ENCODE measurements at regions of chr11 and their contacts with region 1.

Region 1: GRCh38 chr11:44565211-44565952 is at the start of gene CD82:
- DNase-seq: peak; percentile 100
- ATAC-seq: peak; percentile 96 to 97 (median 96)
- H3K4me3 ChIP-seq: peak within 1 kb of the TSS; percentile 28 to 74 (median 60)
- H3K27ac ChIP-seq: peak within 1 kb of the TSS; percentile 90 to 99 (median 96)
- H3K4me1 ChIP-seq: peaks cover 20 to 67% (median 45%) of the 10 kb centered on the region in 12 donors
- H3K27me3 ChIP-seq: no peaks in the 10 kb centered on the region
- CTCF ChIP-seq: peak in 9 of 12 donors; percentile 8 to 54 (median 40)
- POLR2A ChIP-seq: peak in 1 of 2 donors; percentile 84
- total RNA-seq, gene CD82: 20.1 to 76.2 (median 37.3) TPM

Region 2: DNA sequence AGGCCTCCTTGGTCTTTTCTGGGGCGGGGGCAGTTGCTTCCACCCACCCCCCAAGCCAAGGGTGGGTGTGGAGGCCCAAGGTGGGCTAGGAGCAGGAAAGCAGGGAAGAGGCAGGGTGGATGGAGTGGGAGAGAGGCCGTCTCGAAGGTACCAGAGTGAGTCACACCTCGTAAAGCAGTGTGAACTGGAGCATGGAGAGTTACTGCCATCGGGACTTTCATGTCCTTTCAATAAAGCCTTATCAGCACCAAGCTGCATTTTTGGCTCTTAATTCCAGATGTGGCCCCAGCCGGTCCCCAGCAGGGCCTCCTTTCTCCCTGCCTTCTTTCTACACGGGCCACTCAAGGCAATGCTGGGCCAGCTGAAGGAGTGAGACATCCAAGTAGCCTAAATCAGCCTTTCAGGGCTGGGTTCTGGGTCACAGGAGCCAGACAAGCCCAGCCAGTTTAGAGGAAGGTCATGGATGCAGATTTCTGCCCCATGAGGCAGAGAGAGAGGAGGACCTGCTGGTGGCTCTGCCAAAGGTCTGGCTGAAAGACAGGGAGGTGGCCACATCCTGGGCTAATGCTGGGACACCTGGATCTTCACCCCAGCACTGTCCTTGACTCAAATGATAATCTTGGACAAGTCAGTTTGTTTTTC is 58.9 kb before region 1 on chr11:
- intact Hi-C with region 1: no loop called
- DNase-seq: no peak
- ATAC-seq: no peak
- H3K4me3 ChIP-seq: no peak overlapping the region
- H3K27ac ChIP-seq: no peak overlapping the region
- H3K4me1 ChIP-seq: no peaks in the 10 kb centered on the region
- H3K27me3 ChIP-seq: no peaks in the 10 kb centered on the region
- CTCF ChIP-seq: no peak
- POLR2A ChIP-seq: no peak

Region 3: GRCh38 chr11:44600839-44601383 is 35.5 kb after region 1 on chr11:
- intact Hi-C with region 1: loop called in 3 of 10 experiments (anchors 5 kb)
- DNase-seq: peak in 3 of 5 donors; percentile 56 to 76 (median 61)
- ATAC-seq: peak in 3 of 4 donors; percentile 23 to 53 (median 48)
- H3K4me3 ChIP-seq: no peak overlapping the region
- H3K27ac ChIP-seq: peak overlapping the region in 3 of 12 donors; percentile 6 to 61 (median 25)
- H3K4me1 ChIP-seq: peaks cover 0 to 69% (median 44%) of the 10 kb centered on the region in 12 donors
- H3K27me3 ChIP-seq: no peaks in the 10 kb centered on the region
- CTCF ChIP-seq: no peak
- POLR2A ChIP-seq: no peak

Region 4: DNA sequence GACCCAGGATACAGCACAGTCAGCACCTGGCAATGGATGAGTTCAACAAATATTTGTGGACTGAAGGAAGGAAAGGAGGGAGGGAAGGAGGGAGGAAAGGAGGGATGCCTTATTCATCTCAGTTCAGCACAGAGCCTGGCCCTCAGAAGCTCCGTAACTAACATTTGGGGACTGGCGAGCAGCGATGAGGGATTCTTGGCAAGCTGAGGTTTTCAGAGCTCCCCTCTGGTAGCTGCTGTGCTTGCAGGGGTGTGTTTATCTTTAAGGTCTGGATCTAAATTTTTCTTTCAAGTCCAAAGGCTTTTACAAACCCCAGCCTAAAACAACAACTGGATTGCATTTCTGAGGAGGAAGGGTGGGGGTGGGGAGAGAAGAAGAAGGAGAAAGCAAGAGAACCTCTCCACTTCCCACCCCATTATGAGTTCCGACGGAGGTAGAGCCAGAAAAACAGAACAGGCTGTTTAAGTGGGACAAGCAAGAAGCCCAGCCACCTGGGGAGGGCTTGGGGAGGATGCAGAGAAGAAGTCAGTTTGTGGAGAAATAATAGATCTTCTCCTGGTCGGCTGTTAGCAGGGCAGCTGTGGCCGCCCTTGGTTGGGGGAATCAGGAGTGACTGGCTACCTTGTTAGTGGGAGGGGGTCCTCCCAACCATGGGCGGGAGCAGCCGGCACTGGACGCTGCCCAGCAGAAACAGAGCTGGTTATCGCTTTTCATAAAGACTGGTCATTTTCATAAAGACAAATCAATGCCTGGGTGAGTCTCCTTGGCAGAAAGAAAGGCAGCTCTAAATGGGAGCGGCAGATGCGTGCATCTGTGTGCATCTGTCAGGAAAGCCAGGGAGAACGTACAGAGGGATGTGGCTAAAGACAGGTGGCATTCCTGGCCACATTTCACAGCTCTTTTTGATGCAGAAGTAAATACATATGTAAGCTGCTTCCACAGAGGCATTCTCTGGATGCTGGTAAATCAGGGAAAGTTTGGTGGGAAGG is 239.4 kb after region 1 on chr11:
- intact Hi-C with region 1: no loop called
- DNase-seq: no peak
- ATAC-seq: no peak
- H3K4me3 ChIP-seq: peak overlapping the region in 1 of 12 donors; percentile 3
- H3K27ac ChIP-seq: peak overlapping the region in 1 of 12 donors; percentile 69
- H3K4me1 ChIP-seq: peaks cover 0 to 43% (median 18%) of the 10 kb centered on the region in 12 donors
- H3K27me3 ChIP-seq: no peaks in the 10 kb centered on the region
- CTCF ChIP-seq: no peak
- POLR2A ChIP-seq: no peak

Region 5: GRCh38 chr11:44899959-44900358 is 334.6 kb after region 1 on chr11:
- intact Hi-C with region 1: loop called in 2 of 10 experiments (anchors 5 kb)
- DNase-seq: peak in 2 of 5 donors; percentile 28 to 60
- ATAC-seq: peak; percentile 29 to 62 (median 56)
- H3K4me3 ChIP-seq: no peak overlapping the region
- H3K27ac ChIP-seq: no peak overlapping the region
- H3K4me1 ChIP-seq: peaks cover 0 to 7% (median 0%) of the 10 kb centered on the region in 12 donors
- H3K27me3 ChIP-seq: no peaks in the 10 kb centered on the region
- CTCF ChIP-seq: no peak
- POLR2A ChIP-seq: no peak

Region 6: GRCh38 chr11:44911029-44911814 is 345.8 kb after region 1 on chr11:
- intact Hi-C with region 1: loop called in 4 of 10 experiments (anchors 5 kb)
- DNase-seq: peak; percentile 81 to 91 (median 89)
- ATAC-seq: peak; percentile 67 to 82 (median 71)
- H3K4me3 ChIP-seq: peak overlapping the region in 3 of 12 donors; percentile 8 to 29 (median 8)
- H3K27ac ChIP-seq: peak overlapping the region in 7 of 12 donors; percentile 6 to 58 (median 31)
- H3K4me1 ChIP-seq: peaks cover 0 to 47% (median 26%) of the 10 kb centered on the region in 12 donors
- H3K27me3 ChIP-seq: no peaks in the 10 kb centered on the region
- CTCF ChIP-seq: peak; percentile 84 to 96 (median 90)
- POLR2A ChIP-seq: no peak

Region 7: GRCh38 chr11:45089676-45090499 is 524.5 kb after region 1 on chr11:
- intact Hi-C with region 1: loop called in 1 of 10 experiments (anchors 5 kb)
- DNase-seq: no peak
- ATAC-seq: peak in 2 of 4 donors; percentile 16 to 17
- H3K4me3 ChIP-seq: no peak overlapping the region
- H3K27ac ChIP-seq: peak overlapping the region in 11 of 12 donors; percentile 61 to 88 (median 75)
- H3K4me1 ChIP-seq: peaks cover 0 to 63% (median 44%) of the 10 kb centered on the region in 12 donors
- H3K27me3 ChIP-seq: no peaks in the 10 kb centered on the region
- CTCF ChIP-seq: peak in 4 of 12 donors; percentile 11 to 29 (median 14)
- POLR2A ChIP-seq: no peak

Measured in heart left ventricle (tissue), 16 donors.